ENCODE measurements at regions of chr3 and their contacts with region 1.

Region 1: DNA sequence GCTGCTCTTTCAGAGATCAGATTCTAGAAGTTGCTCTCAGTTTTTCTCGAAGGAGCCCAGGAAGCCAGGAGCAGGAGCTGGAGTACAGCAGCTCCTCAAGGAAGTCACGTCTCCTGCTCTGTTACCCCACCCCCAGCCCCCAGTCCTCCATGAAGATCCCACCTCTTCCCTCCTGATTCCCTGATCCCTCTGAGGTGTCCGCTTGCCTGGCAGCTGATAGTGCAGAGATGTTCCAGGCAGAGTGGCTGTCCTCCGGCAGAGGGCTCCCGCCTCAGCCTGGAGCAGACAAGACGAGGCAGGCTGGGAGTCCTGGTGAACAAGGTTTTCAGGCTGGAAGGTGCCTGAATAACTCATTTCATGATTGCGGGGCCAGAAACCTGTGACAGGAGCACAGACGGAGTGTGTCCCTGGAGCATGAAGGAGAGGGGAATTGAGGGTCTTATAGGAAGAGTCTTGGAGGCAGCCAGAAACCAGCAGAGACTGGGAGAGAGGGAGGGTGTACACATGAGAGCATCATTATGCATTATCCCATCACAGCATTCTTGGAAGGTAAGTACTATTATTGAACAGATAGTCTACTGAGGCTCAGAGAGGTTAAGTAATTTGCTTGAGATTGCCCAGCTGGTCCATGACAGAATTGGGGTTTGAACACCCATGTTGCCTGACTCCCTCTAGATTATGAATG is 1.2 kb downstream of the HRH1 start:
- DNase-seq: peak; percentile 85 to 88
- ATAC-seq: peak; percentile 86
- H3K4me3 ChIP-seq: peak overlapping the region; percentile 66 to 91
- H3K27ac ChIP-seq: peak overlapping the region in 1 of 2 donors; percentile 9
- H3K4me1 ChIP-seq: no peaks in the 10 kb centered on the region
- H3K27me3 ChIP-seq: no peaks in the 10 kb centered on the region

Region 2: DNA sequence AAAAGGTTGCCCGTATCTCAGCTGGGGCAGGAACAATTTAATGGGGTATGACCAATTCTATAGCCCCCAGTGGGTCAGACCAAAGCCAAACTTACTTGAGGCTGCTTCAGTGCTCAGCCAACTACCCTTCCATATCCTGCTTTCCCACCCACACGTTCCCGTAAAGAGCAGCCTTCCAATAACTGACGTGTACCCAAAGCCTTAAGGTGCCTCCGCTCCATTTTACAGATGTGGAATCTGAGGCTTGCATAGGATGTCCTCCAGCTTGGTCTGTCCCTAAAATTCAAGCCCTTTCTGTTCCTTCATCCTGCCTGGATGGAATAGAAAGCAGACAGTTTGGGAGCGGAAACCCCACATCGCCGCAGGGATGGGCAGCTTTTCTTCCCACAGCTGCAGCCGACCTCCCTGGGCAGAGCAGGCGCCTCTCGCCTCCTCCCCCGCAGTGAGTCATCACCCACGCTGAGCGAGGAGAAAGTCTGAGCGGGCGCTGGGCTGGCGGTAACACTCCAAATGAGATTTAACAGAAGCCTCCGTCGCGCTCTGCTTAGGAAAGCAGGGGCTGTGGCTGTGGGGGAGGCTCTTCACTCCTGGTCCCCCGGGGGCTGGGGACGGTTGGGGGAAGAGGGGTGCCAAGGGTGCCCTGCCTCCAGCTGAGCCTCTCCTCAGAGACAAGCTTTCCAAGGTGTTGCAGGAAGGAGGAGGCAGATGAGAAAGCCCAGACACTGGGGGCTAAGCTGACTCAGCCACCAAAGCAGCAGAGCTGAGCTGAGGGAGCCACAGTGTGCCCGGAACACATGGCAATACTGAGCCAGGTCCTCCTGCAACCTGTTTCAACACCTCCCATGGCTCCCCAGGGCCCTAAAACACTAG is 59.0 kb before region 1 on chr3:
- intact Hi-C with region 1: loop called in 1 of 2 experiments (anchors 5 kb)
- DNase-seq: peak; percentile 92 to 96
- ATAC-seq: peak; percentile 92
- H3K4me3 ChIP-seq: no peak overlapping the region
- H3K27ac ChIP-seq: peak overlapping the region; percentile 71 to 72
- H3K4me1 ChIP-seq: no peaks in the 10 kb centered on the region
- H3K27me3 ChIP-seq: no peaks in the 10 kb centered on the region

Region 3: GRCh38 chr3:11195721-11196332 is 40.3 kb after region 1 on chr3:
- intact Hi-C with region 1: loop called (anchors 5 kb)
- DNase-seq: peak in 1 of 2 donors; percentile 61
- ATAC-seq: peak; percentile 65
- H3K4me3 ChIP-seq: no peak overlapping the region
- H3K27ac ChIP-seq: peak overlapping the region; percentile 53 to 91
- H3K4me1 ChIP-seq: peaks cover 2 to 3% of the 10 kb centered on the region in 2 donors
- H3K27me3 ChIP-seq: no peaks in the 10 kb centered on the region

Region 4: GRCh38 chr3:11211531-11212298 is 56.2 kb after region 1 on chr3:
- intact Hi-C with region 1: loop called in 1 of 2 experiments (anchors 5 kb)
- DNase-seq: peak; percentile 61 to 64
- ATAC-seq: peak; percentile 47
- H3K4me3 ChIP-seq: no peak overlapping the region
- H3K27ac ChIP-seq: peak overlapping the region; percentile 4 to 97
- H3K4me1 ChIP-seq: peaks cover 5 to 16% of the 10 kb centered on the region in 2 donors
- H3K27me3 ChIP-seq: no peaks in the 10 kb centered on the region

Region 5: GRCh38 chr3:11335056-11335608 is 179.6 kb after region 1 on chr3:
- intact Hi-C with region 1: loop called in 1 of 2 experiments (anchors 5 kb)
- DNase-seq: no peak
- ATAC-seq: peak; percentile 79
- H3K4me3 ChIP-seq: no peak overlapping the region
- H3K27ac ChIP-seq: no peak overlapping the region
- H3K4me1 ChIP-seq: no peaks in the 10 kb centered on the region
- H3K27me3 ChIP-seq: no peaks in the 10 kb centered on the region

Measured in aorta (tissue), 5 donors.